PC-3 (cell line): ENCODE measurements at regions of chr5 and their contacts with region 1.

Region 1: DNA sequence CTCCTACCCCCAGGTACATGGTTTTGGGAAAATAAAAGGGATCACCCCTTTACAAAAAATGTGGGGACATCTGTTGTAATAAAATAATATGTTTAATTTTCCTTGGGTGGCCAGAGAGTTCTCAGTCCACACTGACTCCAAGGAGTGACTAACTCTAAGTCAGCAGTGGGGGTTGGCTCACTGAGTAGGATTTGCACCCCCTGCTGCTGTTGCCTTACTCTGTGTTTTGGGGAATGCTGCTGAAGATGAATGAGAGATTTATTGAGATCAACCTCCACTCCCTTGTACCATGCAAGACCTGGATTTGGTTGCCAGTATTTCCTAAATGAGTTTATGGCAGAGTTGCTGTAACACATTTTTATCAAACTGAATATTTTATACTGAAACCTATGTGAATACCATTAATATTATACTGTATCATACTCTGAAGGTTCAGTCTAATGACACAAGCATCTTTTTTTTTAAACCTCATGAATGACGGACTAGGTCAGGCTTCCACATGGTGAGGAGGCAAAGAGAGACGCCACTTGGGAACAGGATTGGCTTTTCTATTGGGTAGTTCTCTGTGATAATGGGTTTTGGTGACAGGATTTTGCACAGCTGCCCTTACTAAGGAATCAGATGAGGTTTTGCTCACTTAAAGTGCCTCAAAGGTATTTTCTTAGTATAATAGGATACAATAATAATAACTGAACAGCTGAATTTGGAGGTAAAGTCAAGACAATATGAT is 121.3 kb upstream of the OSMR start:
- DNase-seq: peak; percentile 42
- ATAC-seq: peak; percentile 74
- H3K4me3 ChIP-seq: no peak overlapping the region
- H3K27ac ChIP-seq: no peak overlapping the region
- H3K4me1 ChIP-seq: peaks cover 15% of the 10 kb centered on the region
- H3K27me3 ChIP-seq: no peaks in the 10 kb centered on the region
- CTCF ChIP-seq: no peak; the same call in 1 of the 2 replicates

Region 2: GRCh38 chr5:37598733-37599132 is 1125.7 kb before region 1 on chr5:
- CTCF ChIA-PET with region 1: no interaction called
- POLR2A ChIA-PET with region 1: no interaction called
- intact Hi-C with region 1: no loop called
- DNase-seq: no peak
- ATAC-seq: no peak
- H3K4me3 ChIP-seq: no peak overlapping the region
- H3K27ac ChIP-seq: no peak overlapping the region
- H3K4me1 ChIP-seq: no peaks in the 10 kb centered on the region
- H3K27me3 ChIP-seq: no peaks in the 10 kb centered on the region
- CTCF ChIP-seq: no peak

Region 3: DNA sequence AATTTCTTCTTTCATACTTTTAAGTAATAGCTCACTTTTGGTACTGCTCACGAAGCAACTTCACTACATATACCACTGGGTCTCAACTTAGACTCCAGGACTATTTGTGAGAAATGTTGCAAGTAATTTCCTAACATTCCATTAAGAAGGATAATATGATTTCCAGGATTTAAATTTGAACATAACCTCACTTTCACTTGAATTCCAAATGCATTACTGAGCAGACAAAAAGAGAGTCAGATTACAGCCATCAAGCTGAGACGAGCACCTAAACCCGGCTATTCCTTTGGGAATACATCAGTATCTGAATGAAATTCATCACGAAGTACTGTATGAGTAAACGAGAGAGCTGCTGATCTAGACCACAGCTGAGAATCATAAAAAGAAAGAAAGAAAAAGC is 215.3 kb before region 1 on chr5:
- CTCF ChIA-PET with region 1: no interaction called
- POLR2A ChIA-PET with region 1: interaction called, 12 read pairs
- intact Hi-C with region 1: no loop called
- DNase-seq: peak; percentile 73
- ATAC-seq: peak; percentile 97
- H3K4me3 ChIP-seq: peak overlapping the region; percentile 29; the same call in 1 of the 2 replicates
- H3K27ac ChIP-seq: no peak overlapping the region
- H3K4me1 ChIP-seq: peaks cover 12% of the 10 kb centered on the region
- H3K27me3 ChIP-seq: no peaks in the 10 kb centered on the region
- CTCF ChIP-seq: no peak

Region 4: DNA sequence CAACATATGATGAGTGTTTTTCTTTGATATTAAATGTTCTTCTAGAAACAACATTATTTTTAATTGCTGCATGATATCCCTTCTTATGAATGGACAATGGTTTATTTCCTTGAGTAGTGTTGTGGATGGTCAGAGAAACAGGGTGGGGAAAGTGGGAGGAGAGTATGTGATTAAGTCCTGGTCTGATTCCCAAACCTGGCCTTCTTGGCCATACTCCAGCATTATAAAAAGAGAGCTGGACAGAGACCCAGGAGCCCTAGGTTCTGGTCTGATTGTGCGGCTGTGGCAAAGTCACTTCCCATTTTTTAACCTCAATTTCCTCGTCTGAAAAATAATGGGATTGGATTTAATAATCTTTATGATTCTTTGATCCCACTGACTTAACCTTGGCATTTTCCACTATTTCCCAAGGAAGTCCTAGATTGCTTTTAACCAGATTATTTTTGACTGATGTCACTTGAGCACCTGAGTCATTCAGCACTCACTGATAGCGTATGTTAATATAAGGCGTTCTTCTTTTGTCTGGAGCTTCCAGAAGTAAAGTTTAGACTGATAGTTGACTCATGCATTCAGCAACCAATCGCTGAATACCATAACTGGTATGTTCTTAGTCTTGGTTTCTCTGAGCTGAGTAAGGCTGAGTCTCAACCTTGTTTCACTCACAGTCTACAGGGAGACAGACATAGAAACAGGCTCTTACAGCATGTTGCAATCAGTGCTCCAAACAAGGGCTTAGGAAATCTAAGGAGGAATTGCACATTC is 147.5 kb after region 1 on chr5:
- CTCF ChIA-PET with region 1: no interaction called
- POLR2A ChIA-PET with region 1: no interaction called
- intact Hi-C with region 1: no loop called
- DNase-seq: peak; percentile 99
- ATAC-seq: peak; percentile 97
- H3K4me3 ChIP-seq: no peak overlapping the region
- H3K27ac ChIP-seq: peak overlapping the region; percentile 79
- H3K4me1 ChIP-seq: peaks cover 27% of the 10 kb centered on the region
- H3K27me3 ChIP-seq: no peaks in the 10 kb centered on the region
- CTCF ChIP-seq: no peak